K562 (cell line): ENCODE measurements at regions of chr3 and their contacts with region 1.

Region 1: GRCh38 chr3:119034256-119035013 is at the start of gene IGSF11:
- DNase-seq: peak in 3 of 4 experiments; percentile 6 to 78 (median 73)
- ATAC-seq: peak; percentile 99
- H3K4me3 ChIP-seq: peak within 1 kb of the TSS; percentile 53
- H3K27ac ChIP-seq: no peak within 1 kb of the TSS
- H3K4me1 ChIP-seq: peaks cover 0 to 12% of the 10 kb centered on the region in 2 experiments; a peak in 2 of 5 replicates
- H3K27me3 ChIP-seq: peaks cover 0 to 7% of the 10 kb centered on the region in 2 experiments; a peak in 2 of 5 replicates
- CTCF ChIP-seq: peak; percentile 39 to 74 (median 61); a peak in 4 of 6 replicates
- EP300 ChIP-seq: no peak
- POLR2A ChIP-seq: no peak
- RAD21 ChIP-seq: peak; percentile 75 to 84
- polyA plus RNA-seq, gene IGSF11: 1.3 to 1.4 TPM

Region 2: GRCh38 chr3:118801899-118802298 is 232.5 kb before region 1 on chr3:
- CTCF ChIA-PET with region 1: no interaction called
- POLR2A ChIA-PET with region 1: no interaction called
- in situ Hi-C with region 1: no loop called
- intact Hi-C with region 1: no loop called
- DNase-seq: no peak
- ATAC-seq: no peak
- H3K4me3 ChIP-seq: no peak overlapping the region
- H3K27ac ChIP-seq: no peak overlapping the region
- H3K4me1 ChIP-seq: peaks cover 0 to 7% of the 10 kb centered on the region in 2 experiments; a peak in 1 of 5 replicates
- H3K27me3 ChIP-seq: no peaks in the 10 kb centered on the region
- CTCF ChIP-seq: no peak
- EP300 ChIP-seq: no peak
- POLR2A ChIP-seq: no peak
- RAD21 ChIP-seq: no peak

Region 3: GRCh38 chr3:119098619-119099222 is 64.3 kb after region 1 on chr3:
- CTCF ChIA-PET with region 1: interaction called, 4 read pairs
- POLR2A ChIA-PET with region 1: no interaction called
- in situ Hi-C with region 1: no loop called
- intact Hi-C with region 1: loop called (anchors 5 kb)
- DNase-seq: peak; percentile 17 to 44 (median 21)
- ATAC-seq: peak; percentile 64; the same call in 2 of the 3 replicates
- H3K4me3 ChIP-seq: no peak overlapping the region
- H3K27ac ChIP-seq: no peak overlapping the region
- H3K4me1 ChIP-seq: no peaks in the 10 kb centered on the region
- H3K27me3 ChIP-seq: no peaks in the 10 kb centered on the region
- CTCF ChIP-seq: peak; percentile 47 to 73 (median 52); a peak in 4 of 6 replicates
- EP300 ChIP-seq: no peak
- POLR2A ChIP-seq: no peak
- RAD21 ChIP-seq: peak; percentile 93 to 94

Region 4: GRCh38 chr3:119240591-119241434 is 206.4 kb after region 1 on chr3 and contains the start of gene B4GALT4:
- CTCF ChIA-PET with region 1: no interaction called
- POLR2A ChIA-PET with region 1: interaction called, 3 read pairs
- in situ Hi-C with region 1: no loop called
- intact Hi-C with region 1: loop called (anchors 10 kb)
- DNase-seq: peak; percentile 71 to 87 (median 77)
- ATAC-seq: peak; percentile 98
- H3K4me3 ChIP-seq: peak within 1 kb of the TSS; percentile 67
- H3K27ac ChIP-seq: peak within 1 kb of the TSS; percentile 74
- H3K4me1 ChIP-seq: peaks cover 8 to 13% of the 10 kb centered on the region in 2 experiments; a peak in 4 of 5 replicates
- H3K27me3 ChIP-seq: no peaks in the 10 kb centered on the region
- CTCF ChIP-seq: no peak
- EP300 ChIP-seq: no peak
- POLR2A ChIP-seq: peak; percentile 78
- RAD21 ChIP-seq: no peak
- polyA plus RNA-seq, gene B4GALT4: 14.9 to 17.8 TPM